ENCODE measurements at regions of chr15 and their contacts with region 1.

Region 1: GRCh38 chr15:93072411-93073394 is 16.3 kb downstream of the RGMA start:
- DNase-seq: peak in 2 of 3 donors; percentile 42 to 61
- H3K4me3 ChIP-seq: peak overlapping the region; percentile 28 to 81 (median 53)
- H3K27ac ChIP-seq: no peak overlapping the region
- H3K4me1 ChIP-seq: peaks cover 0 to 34% (median 20%) of the 10 kb centered on the region in 4 experiments
- H3K27me3 ChIP-seq: peaks cover 0 to 49% (median 4%) of the 10 kb centered on the region in 5 experiments

Region 2: DNA sequence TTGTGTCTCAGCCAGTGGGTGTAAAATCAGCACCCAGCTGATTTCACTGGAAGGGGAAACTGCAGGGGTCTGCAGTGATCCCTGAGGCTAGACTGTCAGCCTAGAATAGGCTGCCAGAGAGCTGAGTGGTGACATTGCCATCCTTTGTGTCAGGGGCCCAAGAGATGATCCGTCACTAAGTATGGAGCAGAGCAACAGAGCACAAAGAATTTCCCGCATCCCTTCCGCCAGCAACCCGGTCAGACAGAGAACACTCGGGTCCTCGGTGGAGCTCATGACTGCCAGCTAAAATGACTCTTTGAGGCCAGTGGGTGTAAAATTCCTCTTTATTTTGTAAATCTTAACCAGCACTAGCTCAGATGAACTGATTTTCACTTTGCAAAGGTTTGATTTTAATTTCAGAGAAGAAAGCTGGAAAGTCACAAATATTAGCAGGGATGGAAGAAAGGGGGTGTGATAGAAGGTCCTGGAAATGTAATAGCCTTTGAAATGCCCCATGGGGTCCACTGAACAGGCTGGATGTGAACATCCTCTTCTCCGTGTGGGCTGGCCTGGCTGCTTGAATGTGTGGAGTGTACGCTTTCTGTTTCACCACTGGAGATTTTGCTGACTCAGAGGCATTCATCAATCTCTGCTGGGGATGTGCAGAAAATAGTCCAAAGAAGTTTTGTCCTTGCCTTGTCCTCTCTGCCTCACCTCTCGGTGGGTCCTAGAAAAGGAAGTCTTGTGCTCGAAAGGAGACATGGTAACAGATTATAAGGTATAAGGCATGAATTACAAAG is 1833.9 kb before region 1 on chr15:
- CTCF ChIA-PET with region 1: no interaction called
- POLR2A ChIA-PET with region 1: no interaction called
- DNase-seq: peak in 2 of 3 donors; percentile 34 to 37
- H3K4me3 ChIP-seq: no peak overlapping the region
- H3K27ac ChIP-seq: no peak overlapping the region
- H3K4me1 ChIP-seq: no peaks in the 10 kb centered on the region
- H3K27me3 ChIP-seq: peaks cover 0 to 26% (median 2%) of the 10 kb centered on the region in 5 experiments

Region 3: GRCh38 chr15:93087825-93088199 is 15.1 kb after region 1 on chr15:
- CTCF ChIA-PET with region 1: interaction called, 14 read pairs
- POLR2A ChIA-PET with region 1: no interaction called
- DNase-seq: peak; percentile 75 to 88 (median 85)
- H3K4me3 ChIP-seq: peak overlapping the region in 3 of 7 experiments; percentile 30 to 73 (median 57)
- H3K27ac ChIP-seq: no peak overlapping the region
- H3K4me1 ChIP-seq: peaks cover 0 to 20% (median 14%) of the 10 kb centered on the region in 4 experiments
- H3K27me3 ChIP-seq: peaks cover 6 to 74% (median 25%) of the 10 kb centered on the region in 5 experiments